ENCODE measurements at regions of chr17 and their contacts with region 1.

Region 1: DNA sequence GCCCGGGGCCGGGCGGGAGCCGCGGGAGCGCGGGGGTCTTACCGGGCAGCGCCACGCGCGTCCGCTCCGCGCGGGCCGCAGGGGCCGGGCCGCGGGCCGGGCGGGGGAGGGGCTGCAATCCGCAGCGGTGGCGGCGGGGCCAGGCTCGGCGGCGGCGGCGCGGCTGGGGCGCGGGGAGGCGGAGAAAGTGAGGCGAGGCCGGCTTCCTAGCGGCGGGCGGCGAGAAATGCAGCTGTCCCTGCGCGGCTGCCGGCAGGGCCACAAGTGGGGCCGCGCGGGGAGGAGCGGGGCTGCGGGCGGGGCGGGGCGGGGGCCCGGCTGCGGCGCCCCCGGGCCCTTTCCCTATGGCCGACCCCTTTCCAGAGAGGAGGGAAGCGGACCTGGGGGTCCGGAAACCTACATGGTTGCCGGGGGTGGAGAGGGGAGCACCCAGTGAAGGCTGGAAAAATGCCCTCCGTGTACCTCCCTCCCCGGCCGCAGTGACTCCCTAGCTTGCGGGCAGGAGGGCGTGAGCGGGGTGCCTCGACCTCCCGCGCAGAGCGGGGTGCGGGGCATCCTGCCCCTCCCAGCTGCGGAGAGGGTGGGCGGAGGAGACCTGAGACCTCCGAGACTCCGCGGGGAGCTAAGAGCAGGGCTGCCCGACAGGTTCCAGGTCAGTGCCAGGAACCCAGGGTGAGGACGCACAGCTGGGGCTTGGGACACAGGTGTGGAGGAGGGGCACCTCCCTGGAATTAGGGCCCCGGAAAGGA is at the start of gene CUEDC1:
- DNase-seq: peak; percentile 56
- H3K4me3 ChIP-seq: peak within 1 kb of the TSS; percentile 57 to 88 (median 77)
- H3K27ac ChIP-seq: peak within 1 kb of the TSS; percentile 44
- H3K4me1 ChIP-seq: peaks cover 36% of the 10 kb centered on the region
- H3K27me3 ChIP-seq: peaks cover 2 to 7% of the 10 kb centered on the region in 2 experiments
- CTCF ChIP-seq: peak in 1 of 2 donors; percentile 43
- POLR2A ChIP-seq: peak; percentile 23
- total RNA-seq, gene CUEDC1: 27.7 and 28.5 TPM in 2 replicates

Region 2: DNA sequence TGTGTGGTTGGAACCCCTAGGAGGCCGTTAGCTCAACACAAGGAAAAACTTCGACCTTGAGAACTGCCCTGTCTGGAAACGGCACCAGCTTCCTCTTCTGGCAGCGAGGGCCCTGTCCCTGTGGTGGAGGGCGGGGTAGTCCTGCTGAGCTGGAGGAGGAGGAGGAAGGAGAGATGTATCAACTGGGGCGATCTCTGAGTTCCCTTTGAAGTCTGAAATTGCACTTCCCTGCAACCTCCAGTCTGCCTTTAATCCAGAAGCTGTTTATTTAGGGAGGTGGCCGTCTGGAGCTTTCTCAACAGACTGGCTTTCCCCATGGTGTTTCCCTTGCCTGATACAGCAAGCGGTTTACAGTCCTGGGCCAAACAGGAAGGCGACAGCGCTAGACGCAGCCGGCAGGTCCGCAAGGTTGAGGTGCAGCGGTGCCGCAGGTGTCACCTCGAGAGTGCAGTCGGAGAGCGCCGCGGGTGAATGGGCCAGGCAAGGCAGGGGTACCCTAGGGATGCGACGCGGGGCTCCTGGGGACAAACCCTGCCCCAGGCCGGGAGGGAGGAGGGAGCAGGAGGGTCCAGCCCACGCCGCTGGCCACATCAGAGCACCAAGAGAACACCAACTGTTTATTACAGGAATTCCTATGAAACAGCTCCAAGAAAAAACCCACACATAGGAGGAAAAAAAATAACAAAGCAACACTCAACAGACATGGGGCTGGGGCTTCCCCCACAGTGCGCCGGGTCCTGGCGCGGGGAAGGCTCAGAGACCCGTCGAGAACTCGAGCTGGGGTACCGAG is 94.2 kb before region 1 on chr17:
- CTCF ChIA-PET with region 1: interaction called, 45 read pairs
- POLR2A ChIA-PET with region 1: no interaction called
- dilution Hi-C with region 1: no loop called
- intact Hi-C with region 1: loop called (anchors 1 kb)
- DNase-seq: peak; percentile 30
- H3K4me3 ChIP-seq: peak overlapping the region; percentile 21 to 49 (median 31)
- H3K27ac ChIP-seq: no peak overlapping the region
- H3K4me1 ChIP-seq: peaks cover 17% of the 10 kb centered on the region
- H3K27me3 ChIP-seq: no peaks in the 10 kb centered on the region
- CTCF ChIP-seq: no peak
- POLR2A ChIP-seq: no peak

Region 3: GRCh38 chr17:57927048-57927723 is 28.2 kb before region 1 on chr17:
- CTCF ChIA-PET with region 1: interaction called, 11 read pairs
- POLR2A ChIA-PET with region 1: interaction called, 4 read pairs
- dilution Hi-C with region 1: no loop called
- intact Hi-C with region 1: no loop called
- DNase-seq: peak; percentile 73
- H3K4me3 ChIP-seq: no peak overlapping the region
- H3K27ac ChIP-seq: no peak overlapping the region
- H3K4me1 ChIP-seq: peaks cover 27% of the 10 kb centered on the region
- H3K27me3 ChIP-seq: no peaks in the 10 kb centered on the region
- CTCF ChIP-seq: no peak
- POLR2A ChIP-seq: no peak

Region 4: GRCh38 chr17:57935833-57936807 is 19.2 kb before region 1 on chr17:
- CTCF ChIA-PET with region 1: interaction called, 14 read pairs
- POLR2A ChIA-PET with region 1: interaction called, 4 read pairs
- dilution Hi-C with region 1: no loop called
- intact Hi-C with region 1: no loop called
- DNase-seq: no peak
- H3K4me3 ChIP-seq: no peak overlapping the region
- H3K27ac ChIP-seq: peak overlapping the region; percentile 9
- H3K4me1 ChIP-seq: peaks cover 20% of the 10 kb centered on the region
- H3K27me3 ChIP-seq: no peaks in the 10 kb centered on the region
- CTCF ChIP-seq: no peak
- POLR2A ChIP-seq: no peak

Region 5: GRCh38 chr17:57965521-57966160 is 10.3 kb after region 1 on chr17:
- CTCF ChIA-PET with region 1: interaction called, 16 read pairs
- POLR2A ChIA-PET with region 1: no interaction called
- dilution Hi-C with region 1: no loop called
- intact Hi-C with region 1: no loop called
- DNase-seq: no peak
- H3K4me3 ChIP-seq: no peak overlapping the region
- H3K27ac ChIP-seq: no peak overlapping the region
- H3K4me1 ChIP-seq: peaks cover 4% of the 10 kb centered on the region
- H3K27me3 ChIP-seq: no peaks in the 10 kb centered on the region
- CTCF ChIP-seq: no peak
- POLR2A ChIP-seq: no peak

Region 6: GRCh38 chr17:57987580-57988421 is 32.4 kb after region 1 on chr17 and contains the start of gene VEZF1:
- CTCF ChIA-PET with region 1: interaction called, 33 read pairs
- POLR2A ChIA-PET with region 1: interaction called, 3 read pairs
- dilution Hi-C with region 1: no loop called
- intact Hi-C with region 1: loop called (anchors 1 kb)
- DNase-seq: peak; percentile 49
- H3K4me3 ChIP-seq: peak within 1 kb of the TSS; percentile 81 to 89 (median 86)
- H3K27ac ChIP-seq: peak within 1 kb of the TSS; percentile 92
- H3K4me1 ChIP-seq: peaks cover 47% of the 10 kb centered on the region
- H3K27me3 ChIP-seq: no peaks in the 10 kb centered on the region
- CTCF ChIP-seq: no peak
- POLR2A ChIP-seq: no peak
- total RNA-seq, gene VEZF1: 58.2 and 59.0 TPM in 2 replicates

Region 7: DNA sequence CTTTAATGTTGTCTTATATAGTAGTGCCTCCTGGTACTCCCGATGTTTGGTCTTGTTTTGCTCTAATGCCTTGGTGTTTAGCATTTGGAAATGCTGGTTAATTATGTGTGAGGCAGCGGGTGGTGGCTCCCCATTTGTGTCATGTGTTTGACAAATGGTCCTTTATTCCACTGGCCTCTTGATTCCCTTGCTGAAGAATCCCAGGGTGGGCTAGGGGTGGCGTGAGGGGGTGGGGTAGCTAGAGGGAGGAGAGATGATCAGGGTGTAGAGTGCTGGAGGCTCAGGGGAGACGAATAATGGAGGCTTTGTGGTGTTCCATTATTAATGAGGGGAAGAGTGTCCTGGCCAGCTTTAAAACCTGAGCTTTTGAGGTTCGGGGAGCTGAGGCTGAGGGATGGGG is 133.3 kb after region 1 on chr17:
- CTCF ChIA-PET with region 1: no interaction called
- POLR2A ChIA-PET with region 1: no interaction called
- dilution Hi-C with region 1: no loop called
- intact Hi-C with region 1: no loop called
- DNase-seq: no peak
- H3K4me3 ChIP-seq: no peak overlapping the region
- H3K27ac ChIP-seq: no peak overlapping the region
- H3K4me1 ChIP-seq: peaks cover 8% of the 10 kb centered on the region
- H3K27me3 ChIP-seq: no peaks in the 10 kb centered on the region
- CTCF ChIP-seq: no peak
- POLR2A ChIP-seq: no peak

Measured in endothelial cell of umbilical vein (primary cell).